ENCODE measurements at regions of chr9 and their contacts with region 1.

Region 1: DNA sequence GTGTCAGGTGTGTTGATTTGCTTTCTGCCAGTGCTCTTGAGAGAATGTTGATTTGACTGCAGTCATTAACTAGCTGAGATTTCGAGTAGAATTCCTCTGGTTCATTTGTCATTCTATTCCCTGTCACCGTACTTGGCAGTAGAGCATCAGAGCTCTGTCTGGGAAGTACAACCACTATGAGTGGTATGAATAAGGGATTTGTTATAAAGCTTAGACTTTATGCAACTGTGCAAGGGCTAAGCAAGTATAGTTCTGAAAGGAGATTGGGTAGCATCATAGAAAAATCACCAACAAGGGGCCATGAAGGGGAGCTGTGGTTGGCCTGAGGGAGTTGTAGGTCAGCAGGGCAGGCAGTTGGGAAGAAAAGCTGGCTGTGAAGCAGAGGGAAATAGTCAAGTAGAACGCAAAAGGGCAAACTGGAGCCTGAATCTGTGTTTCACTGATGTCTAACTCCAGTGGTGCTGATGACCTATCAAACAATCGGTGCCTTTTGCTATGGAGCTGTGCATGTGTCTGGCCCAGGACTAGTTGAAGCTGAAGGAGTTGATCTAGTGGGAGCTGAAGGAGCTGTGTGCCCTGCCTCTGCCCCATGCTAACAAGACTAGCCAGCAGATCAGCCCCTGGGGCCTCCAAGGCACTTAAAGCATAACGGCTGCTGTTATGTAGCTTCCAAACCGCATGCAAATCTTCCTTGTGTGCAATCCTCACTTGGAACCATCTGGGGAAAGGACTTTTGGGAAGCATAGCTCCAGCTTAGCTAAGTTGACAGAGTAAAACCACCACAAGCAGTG is 110.0 kb downstream of the SLC28A3 start:
- DNase-seq: peak; percentile 14
- H3K4me3 ChIP-seq: no peak overlapping the region
- H3K27ac ChIP-seq: peak overlapping the region in 2 of 3 donors; percentile 34 to 56
- H3K4me1 ChIP-seq: peaks cover 42 to 43% of the 10 kb centered on the region in 2 donors
- H3K27me3 ChIP-seq: no peaks in the 10 kb centered on the region
- CTCF ChIP-seq: no peak
- POLR2A ChIP-seq: peak in 1 of 2 donors; percentile 19

Region 2: DNA sequence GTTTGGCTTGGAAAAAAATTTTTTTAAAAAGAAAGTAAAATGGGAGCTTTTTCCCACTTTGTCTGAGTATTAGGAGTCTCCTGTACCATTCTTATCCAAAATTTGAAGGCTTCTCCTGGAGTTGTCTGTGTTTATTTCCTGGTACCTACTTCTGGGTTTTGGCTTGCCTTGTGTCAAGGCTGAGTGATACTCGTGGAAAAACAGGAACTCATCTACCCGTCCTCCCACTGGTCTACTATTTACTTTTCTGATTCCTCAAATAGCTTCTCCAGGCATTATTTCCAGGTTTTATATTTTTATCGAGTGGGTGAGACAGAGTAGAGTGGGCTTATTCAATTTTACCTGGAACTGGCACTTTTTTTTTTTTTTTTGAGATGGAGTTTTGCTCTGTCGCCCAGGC is 150.6 kb before region 1 on chr9:
- intact Hi-C with region 1: no loop called
- DNase-seq: no peak
- H3K4me3 ChIP-seq: no peak overlapping the region
- H3K27ac ChIP-seq: no peak overlapping the region
- H3K4me1 ChIP-seq: no peaks in the 10 kb centered on the region
- H3K27me3 ChIP-seq: no peaks in the 10 kb centered on the region
- CTCF ChIP-seq: no peak
- POLR2A ChIP-seq: no peak

Region 3: GRCh38 chr9:84123648-84124406 is 106.7 kb before region 1 on chr9:
- intact Hi-C with region 1: no loop called
- DNase-seq: no peak
- H3K4me3 ChIP-seq: no peak overlapping the region
- H3K27ac ChIP-seq: no peak overlapping the region
- H3K4me1 ChIP-seq: peaks cover 20 to 22% of the 10 kb centered on the region in 2 donors
- H3K27me3 ChIP-seq: no peaks in the 10 kb centered on the region
- CTCF ChIP-seq: no peak
- POLR2A ChIP-seq: no peak

Region 4: GRCh38 chr9:84283946-84284345 is 53.4 kb after region 1 on chr9:
- intact Hi-C with region 1: loop called (anchors 5 kb)
- DNase-seq: no peak
- H3K4me3 ChIP-seq: no peak overlapping the region
- H3K27ac ChIP-seq: no peak overlapping the region
- H3K4me1 ChIP-seq: peaks cover 8 to 20% of the 10 kb centered on the region in 2 donors
- H3K27me3 ChIP-seq: no peaks in the 10 kb centered on the region
- CTCF ChIP-seq: no peak
- POLR2A ChIP-seq: no peak

Region 5: GRCh38 chr9:84697509-84698114 is 467.1 kb after region 1 on chr9:
- intact Hi-C with region 1: no loop called
- DNase-seq: peak; percentile 57 to 65
- H3K4me3 ChIP-seq: no peak overlapping the region
- H3K27ac ChIP-seq: peak overlapping the region; percentile 65 to 85 (median 69)
- H3K4me1 ChIP-seq: peaks cover 23 to 35% of the 10 kb centered on the region in 2 donors
- H3K27me3 ChIP-seq: no peaks in the 10 kb centered on the region
- CTCF ChIP-seq: peak in 5 of 6 experiments; percentile 27 to 62 (median 51)
- POLR2A ChIP-seq: no peak